ENCODE measurements at regions of chr7 and their contacts with region 1.

Region 1: GRCh38 chr7:20598459-20599309 is 16.8 kb upstream of the ABCB5 start:
- DNase-seq: peak in 1 of 2 experiments; percentile 53
- H3K4me3 ChIP-seq: no peak overlapping the region
- H3K4me3 Mint-ChIP-seq: no peak overlapping the region
- H3K27ac Mint-ChIP-seq: no peak overlapping the region
- H3K4me1 ChIP-seq: no peaks in the 10 kb centered on the region
- H3K4me1 Mint-ChIP-seq: peaks cover 5% of the 10 kb centered on the region
- H3K27me3 ChIP-seq: no peaks in the 10 kb centered on the region; the same call in 1 of the 2 replicates
- H3K27me3 Mint-ChIP-seq: no peaks in the 10 kb centered on the region
- CTCF ChIP-seq: peak; percentile 68 to 69

Region 2: GRCh38 chr7:19708397-19709248 is 890.1 kb before region 1 on chr7 and contains the start of gene POLR1F:
- CTCF ChIA-PET with region 1: interaction called, 106 read pairs
- POLR2A ChIA-PET with region 1: no interaction called
- intact Hi-C with region 1: loop called (anchors 1 kb)
- DNase-seq: peak; percentile 93 to 97
- H3K4me3 ChIP-seq: peak within 1 kb of the TSS; percentile 77
- H3K4me3 Mint-ChIP-seq: peak within 1 kb of the TSS; percentile 95
- H3K27ac Mint-ChIP-seq: peak within 1 kb of the TSS; percentile 93
- H3K4me1 ChIP-seq: peaks cover 12% of the 10 kb centered on the region; the same call in 1 of the 2 replicates
- H3K4me1 Mint-ChIP-seq: peaks cover 28% of the 10 kb centered on the region
- H3K27me3 ChIP-seq: no peaks in the 10 kb centered on the region
- H3K27me3 Mint-ChIP-seq: no peaks in the 10 kb centered on the region
- CTCF ChIP-seq: peak; percentile 87 to 91
- total RNA-seq, gene POLR1F: 15.6 and 21.6 TPM in 2 replicates

Region 3: DNA sequence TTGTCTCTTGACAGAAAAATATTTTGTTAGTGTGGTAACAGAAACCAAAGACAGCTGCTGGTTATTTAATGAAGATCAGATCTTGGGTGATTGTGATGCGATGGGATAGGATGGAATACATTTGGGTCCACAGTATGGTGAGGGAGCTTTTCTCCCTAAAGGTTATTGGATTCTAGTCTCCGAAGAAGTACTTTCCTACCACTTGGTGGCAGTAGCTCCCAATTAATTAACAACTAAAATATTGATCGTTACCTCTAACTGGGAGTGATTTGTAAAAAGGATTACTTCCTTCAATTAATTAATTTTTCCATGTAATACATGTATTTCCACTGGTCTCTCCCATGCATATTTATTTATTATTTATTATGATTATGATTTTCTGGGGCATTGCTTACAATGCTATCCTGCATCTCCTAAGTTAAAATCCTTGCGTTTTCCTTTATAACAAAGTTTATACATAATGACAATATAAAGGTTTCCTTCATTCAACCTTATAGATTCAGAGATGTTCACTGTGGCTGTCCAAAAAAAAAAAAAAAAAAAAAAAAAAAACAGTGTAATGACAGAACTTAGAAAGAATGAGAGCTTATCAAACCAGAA is 850.8 kb before region 1 on chr7:
- CTCF ChIA-PET with region 1: interaction called, 44 read pairs
- POLR2A ChIA-PET with region 1: no interaction called
- intact Hi-C with region 1: loop called (anchors 1 kb)
- DNase-seq: peak in 1 of 2 experiments; percentile 42
- H3K4me3 ChIP-seq: no peak overlapping the region
- H3K4me3 Mint-ChIP-seq: no peak overlapping the region
- H3K27ac Mint-ChIP-seq: no peak overlapping the region
- H3K4me1 ChIP-seq: no peaks in the 10 kb centered on the region; the same call in 1 of the 2 replicates
- H3K4me1 Mint-ChIP-seq: peaks cover 14% of the 10 kb centered on the region
- H3K27me3 ChIP-seq: no peaks in the 10 kb centered on the region
- H3K27me3 Mint-ChIP-seq: no peaks in the 10 kb centered on the region
- CTCF ChIP-seq: peak; percentile 45 to 51

Region 4: DNA sequence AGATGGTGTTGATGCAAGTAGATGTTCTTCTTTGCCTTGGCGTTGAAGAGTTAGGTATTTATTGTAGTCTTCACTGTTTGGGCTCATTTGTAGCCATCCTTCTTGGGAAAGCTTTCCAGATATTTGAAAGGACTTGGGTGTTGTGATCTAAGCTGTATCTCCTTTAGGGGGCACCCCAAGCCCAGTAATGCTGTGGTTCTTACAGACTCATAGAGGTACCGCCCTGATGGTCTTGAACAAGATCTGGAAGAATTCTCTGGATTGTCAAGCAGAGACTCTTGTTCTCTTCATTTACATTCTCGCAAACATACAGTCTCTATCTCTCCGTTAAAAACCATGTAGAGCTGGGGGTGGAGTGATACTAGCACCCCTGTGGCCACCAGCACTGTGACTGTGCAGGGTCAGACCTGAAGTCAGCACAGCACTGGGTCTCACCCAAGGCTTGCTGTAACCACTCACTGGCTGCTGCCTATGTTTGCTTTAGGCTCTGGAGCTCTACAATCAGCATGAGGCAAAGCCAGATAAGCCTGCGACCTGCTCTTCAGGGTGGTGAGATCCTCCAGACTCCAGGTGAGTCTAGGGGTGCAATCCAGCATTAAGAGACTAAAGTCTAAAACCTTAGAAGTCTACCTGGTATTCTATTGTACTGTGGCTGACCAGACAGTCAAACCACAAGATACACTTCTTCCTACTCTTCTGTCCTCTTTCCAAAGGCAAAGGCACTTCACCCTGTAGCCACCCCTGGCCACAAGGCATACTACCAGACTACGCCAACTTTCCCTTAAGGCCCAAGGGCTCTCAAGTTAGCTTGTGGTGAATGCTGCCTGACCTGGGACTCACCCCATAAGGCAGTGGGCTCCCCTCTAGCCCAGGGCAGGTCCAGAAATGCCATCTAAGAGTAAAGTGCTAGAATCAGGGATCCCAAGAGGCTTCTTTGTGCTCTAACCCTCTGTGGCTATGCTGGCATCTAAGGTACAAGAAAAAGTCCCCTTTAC is 615.5 kb before region 1 on chr7:
- CTCF ChIA-PET with region 1: interaction called, 11 read pairs
- POLR2A ChIA-PET with region 1: no interaction called
- intact Hi-C with region 1: loop called (anchors 1 kb)
- DNase-seq: peak; percentile 81 to 82
- H3K4me3 ChIP-seq: no peak overlapping the region
- H3K4me3 Mint-ChIP-seq: no peak overlapping the region
- H3K27ac Mint-ChIP-seq: peak overlapping the region; percentile 37
- H3K4me1 ChIP-seq: peaks cover 14% of the 10 kb centered on the region
- H3K4me1 Mint-ChIP-seq: peaks cover 10% of the 10 kb centered on the region
- H3K27me3 ChIP-seq: no peaks in the 10 kb centered on the region
- H3K27me3 Mint-ChIP-seq: no peaks in the 10 kb centered on the region
- CTCF ChIP-seq: peak; percentile 46 to 63

Region 5: GRCh38 chr7:20172736-20173334 is 425.8 kb before region 1 on chr7:
- CTCF ChIA-PET with region 1: interaction called, 3 read pairs
- POLR2A ChIA-PET with region 1: no interaction called
- intact Hi-C with region 1: loop called (anchors 2 kb)
- DNase-seq: peak; percentile 78 to 82
- H3K4me3 ChIP-seq: no peak overlapping the region
- H3K4me3 Mint-ChIP-seq: no peak overlapping the region
- H3K27ac Mint-ChIP-seq: no peak overlapping the region
- H3K4me1 ChIP-seq: peaks cover 6% of the 10 kb centered on the region
- H3K4me1 Mint-ChIP-seq: peaks cover 21% of the 10 kb centered on the region
- H3K27me3 ChIP-seq: no peaks in the 10 kb centered on the region
- H3K27me3 Mint-ChIP-seq: no peaks in the 10 kb centered on the region
- CTCF ChIP-seq: peak; percentile 69 to 88

Region 6: DNA sequence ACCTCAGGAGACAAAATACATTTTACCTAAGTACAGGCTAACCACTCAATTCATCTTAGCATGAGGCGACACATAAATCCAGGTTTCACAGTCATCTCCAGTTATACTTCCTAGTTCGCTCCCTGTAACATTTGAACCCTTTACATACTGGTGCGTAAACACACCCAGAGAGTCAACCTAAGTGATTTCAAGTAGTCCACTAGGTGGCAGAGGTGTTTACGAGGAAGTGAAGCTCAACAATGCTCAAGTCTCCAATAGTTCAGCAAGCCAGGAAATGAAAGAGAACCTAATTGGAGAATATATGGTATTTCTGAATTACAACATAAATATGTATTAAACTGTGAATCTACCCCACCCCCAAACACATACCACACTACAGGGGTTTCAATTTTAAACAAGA is 59.5 kb before region 1 on chr7:
- CTCF ChIA-PET with region 1: interaction called, 25 read pairs
- POLR2A ChIA-PET with region 1: no interaction called
- intact Hi-C with region 1: loop called (anchors 1 kb)
- DNase-seq: peak in 1 of 2 experiments; percentile 34
- H3K4me3 ChIP-seq: no peak overlapping the region
- H3K4me3 Mint-ChIP-seq: no peak overlapping the region
- H3K27ac Mint-ChIP-seq: no peak overlapping the region
- H3K4me1 ChIP-seq: no peaks in the 10 kb centered on the region
- H3K4me1 Mint-ChIP-seq: no peaks in the 10 kb centered on the region
- H3K27me3 ChIP-seq: no peaks in the 10 kb centered on the region
- H3K27me3 Mint-ChIP-seq: peaks cover 6% of the 10 kb centered on the region
- CTCF ChIP-seq: peak; percentile 31

Region 7: GRCh38 chr7:20574784-20575720 is 23.6 kb before region 1 on chr7:
- CTCF ChIA-PET with region 1: no interaction called
- POLR2A ChIA-PET with region 1: no interaction called
- intact Hi-C with region 1: no loop called
- DNase-seq: no peak
- H3K4me3 ChIP-seq: no peak overlapping the region
- H3K4me3 Mint-ChIP-seq: no peak overlapping the region
- H3K27ac Mint-ChIP-seq: no peak overlapping the region
- H3K4me1 ChIP-seq: 0 out of 2 replicates have a peak, but pooled peaks cover 4% of the 10 kb centered on the region
- H3K4me1 Mint-ChIP-seq: no peaks in the 10 kb centered on the region
- H3K27me3 ChIP-seq: no peaks in the 10 kb centered on the region
- H3K27me3 Mint-ChIP-seq: peaks cover 2% of the 10 kb centered on the region
- CTCF ChIP-seq: no peak

Region 8: DNA sequence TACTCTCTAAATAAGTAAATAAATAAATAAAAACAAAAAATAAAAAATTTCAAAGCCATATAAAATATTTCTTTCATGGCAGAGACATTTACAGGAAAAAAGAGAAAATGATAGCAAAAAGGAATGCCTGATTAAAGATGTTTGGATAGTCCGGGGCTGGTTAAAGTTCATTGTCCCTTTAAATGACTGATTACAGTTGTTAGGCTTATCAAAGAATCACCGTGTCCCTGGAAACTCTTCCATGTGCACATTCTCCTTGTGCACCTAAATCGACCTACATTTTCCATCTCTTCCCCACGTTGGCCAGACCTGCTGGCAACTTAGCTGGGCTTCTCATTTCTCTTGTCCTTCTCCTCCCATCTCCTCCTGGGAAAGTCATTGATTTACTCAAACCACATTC is 85.9 kb after region 1 on chr7:
- CTCF ChIA-PET with region 1: no interaction called
- POLR2A ChIA-PET with region 1: no interaction called
- intact Hi-C with region 1: no loop called
- DNase-seq: no peak
- H3K4me3 ChIP-seq: no peak overlapping the region
- H3K4me3 Mint-ChIP-seq: no peak overlapping the region
- H3K27ac Mint-ChIP-seq: no peak overlapping the region
- H3K4me1 ChIP-seq: peaks cover 9% of the 10 kb centered on the region; the same call in 1 of the 2 replicates
- H3K4me1 Mint-ChIP-seq: peaks cover 7% of the 10 kb centered on the region
- H3K27me3 ChIP-seq: no peaks in the 10 kb centered on the region
- H3K27me3 Mint-ChIP-seq: no peaks in the 10 kb centered on the region
- CTCF ChIP-seq: no peak